Activated naive CD4-positive, alpha-beta T cell treated with anti-CD3 and anti-CD28 coated beads for 36 hours (primary cell): ENCODE measurements at regions of chr21 and their contacts with region 1.

Region 1: DNA sequence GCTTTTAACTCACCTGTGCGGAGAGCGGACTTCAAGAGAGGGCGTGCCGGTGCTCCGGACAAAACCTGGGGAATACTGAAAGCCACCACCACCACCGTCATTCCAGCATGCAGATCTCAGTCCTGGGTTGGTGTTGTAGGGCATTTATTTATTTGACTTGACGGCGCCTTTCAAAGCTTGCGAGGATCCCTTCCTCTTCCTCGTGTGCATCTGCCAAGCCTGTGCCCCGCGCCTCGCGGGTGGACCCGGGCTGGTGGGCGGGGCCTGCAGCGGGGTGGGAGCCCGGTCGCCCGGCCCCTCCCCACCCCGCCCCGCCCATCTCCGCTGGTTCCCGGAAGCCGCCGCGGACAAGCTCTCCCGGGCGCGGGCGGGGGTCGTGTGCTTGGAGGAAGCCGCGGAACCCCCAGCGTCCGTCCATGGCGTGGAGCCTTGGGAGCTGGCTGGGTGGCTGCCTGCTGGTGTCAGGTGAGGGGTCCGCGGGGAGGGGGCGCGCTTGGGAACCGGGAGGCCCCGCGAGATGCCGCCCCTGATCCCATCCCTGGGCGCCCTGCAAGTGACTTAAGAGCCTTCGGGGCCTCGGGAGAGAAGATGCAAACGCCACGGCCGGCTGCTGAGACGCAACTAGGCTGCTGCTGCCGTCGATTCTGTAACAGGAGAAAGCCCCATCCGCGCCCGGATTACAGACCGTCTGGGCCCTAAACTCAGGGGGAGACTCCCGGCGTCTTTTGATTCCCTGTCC is at the start of gene IL10RB:
- DNase-seq: peak; percentile 65
- H3K4me3 Mint-ChIP-seq: peak within 1 kb of the TSS; percentile 99
- H3K27ac Mint-ChIP-seq: peak within 1 kb of the TSS; percentile 95
- H3K4me1 Mint-ChIP-seq: peaks cover 49% of the 10 kb centered on the region
- H3K27me3 Mint-ChIP-seq: no peaks in the 10 kb centered on the region
- total RNA-seq, gene IL10RB: 23.9 TPM

Region 2: DNA sequence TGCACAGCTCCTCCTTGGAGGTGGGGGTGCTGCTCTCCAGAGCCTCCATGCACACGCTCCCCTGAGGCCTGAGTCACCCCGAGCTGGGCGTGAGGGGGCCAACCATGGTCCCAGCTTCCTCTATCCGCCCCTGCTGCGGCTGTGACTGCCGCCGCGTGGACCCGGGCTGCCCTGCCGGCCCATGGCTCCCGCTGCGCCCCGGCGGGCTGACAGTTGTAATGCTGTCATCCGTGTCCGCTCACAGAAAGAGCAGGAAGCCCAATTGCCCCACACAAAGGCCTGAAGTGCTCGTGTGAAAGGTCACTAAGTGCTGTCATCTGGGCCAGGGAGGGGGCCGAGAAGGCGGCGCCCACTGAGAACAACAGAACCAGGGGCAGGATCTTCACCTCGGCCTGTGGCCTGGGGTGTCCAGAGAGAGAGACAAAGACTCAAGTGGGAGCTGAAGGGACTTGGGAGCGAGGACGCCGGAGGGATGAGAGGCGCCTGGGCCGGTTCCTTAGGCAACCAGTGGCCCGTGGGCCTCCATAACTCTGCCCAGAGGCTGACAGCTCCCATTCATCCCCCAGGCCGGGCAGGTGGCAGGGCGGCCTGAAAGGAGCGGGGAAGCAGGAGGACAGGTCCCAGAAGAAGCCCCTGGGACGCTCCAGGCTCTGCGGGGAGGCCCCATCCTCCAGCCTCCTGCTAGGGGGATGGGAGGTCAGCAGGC is 164.8 kb before region 1 on chr21:
- CTCF ChIA-PET with region 1: no interaction called
- intact Hi-C with region 1: no loop called
- DNase-seq: no peak
- H3K4me3 Mint-ChIP-seq: no peak overlapping the region
- H3K27ac Mint-ChIP-seq: no peak overlapping the region
- H3K4me1 Mint-ChIP-seq: no peaks in the 10 kb centered on the region
- H3K27me3 Mint-ChIP-seq: no peaks in the 10 kb centered on the region

Region 3: DNA sequence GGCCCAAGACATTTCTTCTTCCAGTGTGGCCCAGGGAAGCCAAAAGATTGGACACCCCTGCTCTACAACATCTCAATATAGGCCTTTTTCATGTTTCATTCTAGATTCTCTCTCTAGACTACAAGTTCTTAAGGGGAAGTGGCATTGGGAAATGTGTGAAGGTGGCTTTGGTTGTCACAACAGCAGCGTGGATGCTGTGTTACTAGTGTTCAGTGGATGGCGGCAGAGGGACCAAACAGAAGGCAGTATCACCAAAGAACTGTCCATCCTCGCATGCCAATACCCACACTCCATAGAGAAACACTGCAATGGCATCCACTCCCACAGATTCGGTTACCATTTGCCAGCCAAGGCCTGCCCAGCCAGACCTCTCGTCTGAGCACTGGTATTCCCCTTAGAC is 60.7 kb before region 1 on chr21:
- CTCF ChIA-PET with region 1: no interaction called
- intact Hi-C with region 1: loop called (anchors 2 kb)
- DNase-seq: peak; percentile 42
- H3K4me3 Mint-ChIP-seq: no peak overlapping the region
- H3K27ac Mint-ChIP-seq: peak overlapping the region; percentile 5
- H3K4me1 Mint-ChIP-seq: peaks cover 39% of the 10 kb centered on the region
- H3K27me3 Mint-ChIP-seq: no peaks in the 10 kb centered on the region

Region 4: DNA sequence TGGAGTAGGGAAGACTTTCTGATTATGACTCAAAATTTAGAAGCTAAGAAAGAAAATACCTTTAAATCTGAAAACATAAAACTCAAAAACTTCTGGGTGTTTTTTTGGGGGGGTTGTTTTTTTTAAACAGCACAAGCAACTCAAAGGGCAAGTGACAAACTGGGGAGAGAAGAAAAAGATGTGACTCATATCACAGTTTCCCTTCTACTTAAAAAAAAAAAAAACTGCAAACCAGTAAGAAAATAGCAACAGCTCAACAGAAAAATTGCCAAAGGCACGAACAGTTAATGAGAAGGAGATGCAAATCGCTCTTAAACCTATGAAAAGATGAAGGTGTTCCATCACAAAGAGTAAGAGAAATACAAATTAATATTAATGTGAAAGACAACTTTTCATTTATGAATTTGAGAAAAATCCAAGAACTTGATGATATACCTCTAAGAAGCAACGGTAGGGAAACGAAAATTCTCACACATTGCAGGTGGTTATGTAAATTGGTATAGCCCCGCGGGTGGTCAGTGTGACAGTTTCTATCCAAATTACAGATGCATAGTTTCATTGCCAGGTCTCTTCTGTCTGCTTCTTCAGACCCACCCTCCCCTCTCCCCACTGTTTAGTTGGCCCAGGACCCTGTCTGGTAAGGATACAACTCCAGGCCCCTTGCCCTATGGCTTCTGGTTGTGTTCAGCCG is 27.5 kb before region 1 on chr21:
- CTCF ChIA-PET with region 1: interaction called, 4 read pairs
- intact Hi-C with region 1: loop called (anchors 2 kb)
- DNase-seq: no peak
- H3K4me3 Mint-ChIP-seq: peak overlapping the region; percentile 3
- H3K27ac Mint-ChIP-seq: peak overlapping the region; percentile 76
- H3K4me1 Mint-ChIP-seq: peaks cover 80% of the 10 kb centered on the region
- H3K27me3 Mint-ChIP-seq: no peaks in the 10 kb centered on the region

Region 5: DNA sequence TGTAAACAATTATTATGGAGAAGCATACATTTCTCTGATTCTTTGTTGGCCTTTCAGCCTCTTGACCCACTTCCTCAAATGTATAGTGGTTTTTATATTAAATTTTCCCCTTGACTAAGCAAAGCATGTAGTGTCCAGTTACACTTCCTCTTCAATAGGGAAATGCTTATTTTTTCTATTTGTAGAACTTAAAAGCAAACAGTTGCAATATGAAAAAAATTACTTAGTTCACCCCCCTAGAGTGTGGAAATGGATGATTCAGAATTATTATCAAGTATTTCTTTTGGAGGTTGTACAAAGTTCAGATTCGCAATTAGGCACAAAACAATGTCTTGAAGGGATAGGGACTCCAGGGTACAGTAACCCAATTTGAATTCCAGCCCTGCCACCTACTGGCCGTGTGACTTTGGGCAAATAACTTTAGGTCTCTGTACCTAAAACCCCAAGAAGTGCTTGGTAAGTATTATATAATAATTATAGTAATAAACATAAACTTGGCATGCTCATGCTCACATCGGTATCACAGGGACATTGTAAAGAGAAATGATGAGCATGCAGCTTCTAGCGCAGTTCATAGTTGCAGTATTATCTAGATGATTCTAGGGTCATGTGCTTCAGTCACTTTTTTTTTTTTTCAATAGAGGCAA is 108.4 kb after region 1 on chr21:
- CTCF ChIA-PET with region 1: interaction called, 4 read pairs
- intact Hi-C with region 1: loop called (anchors 2 kb)
- DNase-seq: peak; percentile 81
- H3K4me3 Mint-ChIP-seq: no peak overlapping the region
- H3K27ac Mint-ChIP-seq: no peak overlapping the region
- H3K4me1 Mint-ChIP-seq: peaks cover 13% of the 10 kb centered on the region
- H3K27me3 Mint-ChIP-seq: no peaks in the 10 kb centered on the region

Region 6: DNA sequence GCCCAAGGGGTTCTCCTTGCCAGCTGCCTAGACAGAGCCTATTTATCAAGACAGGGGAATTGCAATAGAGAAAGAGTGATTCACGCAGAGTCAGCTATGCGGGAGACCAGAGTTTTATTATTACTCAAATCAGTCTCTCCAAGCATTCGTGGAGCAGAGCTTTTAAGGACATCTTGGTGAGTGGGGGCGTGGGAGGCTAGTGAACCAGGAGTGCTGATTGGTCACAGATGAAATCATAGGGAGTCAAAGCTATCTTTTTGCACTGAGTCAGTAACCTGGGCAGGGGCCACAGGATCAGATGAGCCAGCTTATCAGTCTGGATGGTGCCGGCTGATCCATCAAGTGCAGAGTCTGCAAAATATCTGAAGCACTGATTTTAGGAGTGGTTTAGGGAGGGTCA is 742.4 kb after region 1 on chr21:
- CTCF ChIA-PET with region 1: no interaction called
- intact Hi-C with region 1: no loop called
- DNase-seq: peak; percentile 69
- H3K4me3 Mint-ChIP-seq: no peak overlapping the region
- H3K27ac Mint-ChIP-seq: no peak overlapping the region
- H3K4me1 Mint-ChIP-seq: peaks cover 12% of the 10 kb centered on the region
- H3K27me3 Mint-ChIP-seq: no peaks in the 10 kb centered on the region